ENCODE measurements at regions of chr17 and their contacts with region 1.

Region 1: DNA sequence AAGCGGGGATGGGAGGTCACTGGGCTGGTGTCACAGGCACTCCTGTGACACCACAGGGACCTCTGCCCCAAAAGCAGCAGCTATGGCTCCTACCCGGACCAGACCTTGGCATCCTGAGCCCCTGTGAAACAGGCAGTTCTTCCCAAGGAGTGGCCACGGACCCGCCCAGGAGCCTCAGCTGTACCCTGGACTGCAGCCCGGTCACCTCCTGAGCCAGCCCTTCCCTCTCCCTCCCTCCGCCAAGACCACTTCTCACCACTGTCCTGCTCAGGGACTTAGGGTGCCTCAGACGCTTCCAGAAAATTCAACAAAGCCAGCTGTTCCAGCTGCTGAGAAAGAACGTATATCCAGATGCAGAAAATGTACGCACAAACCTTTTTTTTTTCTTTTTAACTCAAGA is 13.9 kb upstream of the NCBP3 start:
- DNase-seq: no peak
- H3K4me3 ChIP-seq: no peak overlapping the region
- H3K27ac ChIP-seq: no peak overlapping the region
- H3K4me1 ChIP-seq: peaks cover 0 to 5% (median 3%) of the 10 kb centered on the region in 4 donors
- H3K27me3 ChIP-seq: no peaks in the 10 kb centered on the region
- CTCF ChIP-seq: no peak

Region 2: DNA sequence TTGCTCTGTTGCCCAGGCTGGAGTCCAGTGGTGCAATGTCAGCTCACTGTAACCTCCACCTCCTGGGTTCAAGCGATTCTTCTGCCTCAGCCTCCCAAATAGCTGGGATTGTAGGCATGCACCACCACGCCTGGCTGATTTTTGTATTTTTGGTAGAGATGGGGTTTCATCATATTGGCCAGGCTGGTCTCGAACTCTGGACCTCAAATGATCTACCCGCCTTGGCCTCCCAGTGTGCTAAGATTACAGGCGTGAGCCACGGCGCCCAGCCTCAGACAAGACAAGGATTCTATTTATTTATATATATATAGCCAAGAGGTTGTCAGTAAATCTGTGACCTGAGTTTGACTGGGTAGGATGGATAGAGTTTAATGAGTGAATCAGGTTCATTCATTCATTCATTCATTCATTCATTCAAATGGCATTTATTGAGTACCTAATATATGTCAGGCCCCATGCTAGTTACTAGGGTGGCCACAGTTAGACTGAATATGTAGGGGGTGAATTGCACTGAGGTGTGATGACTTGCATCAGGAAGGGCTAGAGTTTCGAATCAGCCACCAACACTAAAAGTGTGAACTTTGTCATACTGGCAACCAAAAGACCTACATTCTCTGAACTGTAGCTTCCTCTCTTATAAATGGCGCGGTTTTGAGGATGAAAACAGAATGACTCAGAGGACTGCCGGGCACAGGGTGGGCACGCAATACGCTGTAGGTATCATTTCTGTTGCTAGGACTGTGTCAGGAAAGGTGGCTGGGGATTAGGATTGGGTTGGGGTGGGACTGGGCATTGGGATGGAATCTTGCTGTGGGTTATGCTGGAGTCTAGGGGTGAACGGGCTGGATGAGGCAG is 96.8 kb before region 1 on chr17:
- intact Hi-C with region 1: no loop called
- DNase-seq: no peak
- H3K4me3 ChIP-seq: no peak overlapping the region
- H3K27ac ChIP-seq: no peak overlapping the region
- H3K4me1 ChIP-seq: no peaks in the 10 kb centered on the region
- H3K27me3 ChIP-seq: peaks cover 0 to 18% of the 10 kb centered on the region in 2 donors
- CTCF ChIP-seq: no peak

Region 3: GRCh38 chr17:3796110-3796821 is 63.7 kb before region 1 on chr17:
- intact Hi-C with region 1: no loop called
- DNase-seq: no peak
- H3K4me3 ChIP-seq: no peak overlapping the region
- H3K27ac ChIP-seq: no peak overlapping the region
- H3K4me1 ChIP-seq: no peaks in the 10 kb centered on the region
- H3K27me3 ChIP-seq: peaks cover 0 to 12% of the 10 kb centered on the region in 2 donors
- CTCF ChIP-seq: no peak

Region 4: DNA sequence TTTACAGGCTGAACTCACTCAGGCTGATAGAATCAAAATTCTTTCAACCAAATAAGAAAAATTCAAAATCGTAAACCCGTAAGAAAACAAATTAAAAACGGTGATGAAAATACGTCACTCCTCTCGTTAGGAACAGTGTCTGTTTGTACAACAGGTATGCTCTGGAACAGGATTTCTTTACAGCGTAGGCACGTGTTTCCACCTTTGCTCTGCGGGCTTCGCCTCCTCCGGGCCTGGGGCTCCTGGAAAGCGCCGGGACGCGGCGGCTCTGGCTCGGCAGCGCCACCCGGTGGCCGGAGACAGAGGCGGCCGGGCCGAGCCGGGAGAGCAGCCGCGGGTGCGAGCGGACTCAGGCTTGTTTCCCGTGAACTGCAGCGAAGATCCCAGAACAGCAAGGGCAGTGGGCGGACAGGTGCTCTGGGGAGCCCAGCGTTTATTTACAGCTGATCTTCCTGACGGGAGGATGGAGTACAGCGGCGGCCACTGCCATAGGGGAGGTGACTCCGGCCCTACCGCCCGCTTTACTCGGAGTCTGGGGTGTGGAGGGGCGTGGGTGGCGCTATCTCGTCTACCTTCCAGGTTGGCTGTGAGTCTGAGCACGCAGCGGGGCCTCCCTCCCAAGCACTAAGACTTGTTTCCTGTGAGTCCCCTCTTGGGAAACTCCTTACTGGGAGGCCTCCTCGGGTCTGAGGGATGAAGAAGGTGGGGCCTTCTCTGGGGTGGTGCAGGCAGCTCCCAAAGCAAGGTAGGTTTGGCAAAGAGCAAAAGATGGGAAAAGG is 144.8 kb after region 1 on chr17:
- intact Hi-C with region 1: loop called (anchors 5 kb)
- DNase-seq: no peak
- H3K4me3 ChIP-seq: no peak overlapping the region
- H3K27ac ChIP-seq: no peak overlapping the region
- H3K4me1 ChIP-seq: peaks cover 0 to 16% (median 6%) of the 10 kb centered on the region in 4 donors
- H3K27me3 ChIP-seq: peaks cover 0 to 10% of the 10 kb centered on the region in 2 donors
- CTCF ChIP-seq: peak; percentile 85 to 89

Region 5: DNA sequence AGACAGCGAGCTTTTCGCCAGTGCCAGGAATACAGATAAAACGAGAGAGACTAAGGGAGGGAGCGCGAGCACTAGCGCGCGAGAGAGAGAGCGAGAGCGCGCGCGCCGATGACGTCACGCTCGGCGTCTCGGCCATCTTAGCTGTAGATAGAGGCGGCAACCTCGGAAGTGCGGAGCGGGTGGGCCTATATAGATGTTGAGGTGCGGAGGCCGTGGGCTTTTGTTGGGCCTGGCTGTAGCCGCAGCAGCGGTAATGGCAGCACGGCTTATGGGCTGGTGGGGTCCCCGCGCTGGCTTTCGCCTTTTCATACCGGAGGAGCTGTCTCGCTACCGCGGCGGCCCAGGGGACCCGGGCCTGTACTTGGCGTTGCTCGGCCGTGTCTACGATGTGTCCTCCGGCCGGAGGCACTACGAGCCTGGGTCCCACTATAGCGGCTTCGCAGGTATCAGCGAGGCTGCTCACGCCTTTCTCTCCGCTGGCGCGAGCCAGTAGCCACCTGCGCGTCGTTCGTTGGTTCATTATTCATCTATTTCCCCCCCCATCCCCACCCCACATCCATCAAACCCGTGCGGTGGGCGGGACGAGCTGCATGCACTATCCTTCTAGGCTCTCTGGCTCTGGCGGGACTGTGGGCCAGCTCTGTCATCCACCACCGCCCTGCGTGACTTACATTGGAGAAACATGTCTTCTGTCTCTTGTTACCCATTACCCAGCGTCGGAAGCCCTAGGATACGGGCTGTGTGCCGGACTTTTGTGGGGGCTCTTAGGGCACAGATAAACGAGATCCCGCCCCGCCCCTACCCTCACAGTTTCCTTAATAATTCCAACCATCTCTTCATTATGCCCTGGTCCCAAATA is 283.9 kb after region 1 on chr17:
- intact Hi-C with region 1: no loop called
- DNase-seq: peak; percentile 92 to 93
- H3K4me3 ChIP-seq: peak overlapping the region; percentile 91 to 98
- H3K27ac ChIP-seq: peak overlapping the region; percentile 98 to 99
- H3K4me1 ChIP-seq: peaks cover 0 to 43% (median 33%) of the 10 kb centered on the region in 4 donors
- H3K27me3 ChIP-seq: no peaks in the 10 kb centered on the region
- CTCF ChIP-seq: peak in 1 of 2 experiments; percentile 15

Measured in tibial artery (tissue), 4 donors.